ENCODE measurements at regions of chr19 and their contacts with region 1.

Region 1: GRCh38 chr19:12716861-12717260 is 6.9 kb downstream of the TNPO2 start:
- H3K4me3 Mint-ChIP-seq: no peak overlapping the region
- H3K27ac Mint-ChIP-seq: no peak overlapping the region
- H3K4me1 Mint-ChIP-seq: peaks cover 26% of the 10 kb centered on the region
- H3K27me3 Mint-ChIP-seq: no peaks in the 10 kb centered on the region

Region 2: GRCh38 chr19:12757544-12758274 is 40.8 kb after region 1 on chr19:
- intact Hi-C with region 1: loop called (anchors 1 kb)
- H3K4me3 Mint-ChIP-seq: peak overlapping the region; percentile 49
- H3K27ac Mint-ChIP-seq: no peak overlapping the region
- H3K4me1 Mint-ChIP-seq: peaks cover 11% of the 10 kb centered on the region
- H3K27me3 Mint-ChIP-seq: peaks cover 34% of the 10 kb centered on the region